ENCODE measurements at regions of chr13 and their contacts with region 1.

Region 1: GRCh38 chr13:21060987-21061763 is at the start of gene LATS2:
- DNase-seq: peak; percentile 85 to 94 (median 88)
- H3K4me3 ChIP-seq: peak within 1 kb of the TSS; percentile 49 to 93 (median 76)
- H3K27ac ChIP-seq: peak within 1 kb of the TSS in 58 of 59 donors; percentile 12 to 98 (median 89)
- H3K27me3 ChIP-seq: peaks cover 0 to 21% (median 4%) of the 10 kb centered on the region in 45 donors
- CTCF ChIP-seq: peak in 41 of 56 donors; percentile 12 to 62 (median 37)
- total RNA-seq, gene LATS2: 2.5 to 18.2 (median 6.0) TPM

Region 2: GRCh38 chr13:20940083-20940880 is 120.9 kb before region 1 on chr13:
- intact Hi-C with region 1: loop called in 1 of 2 experiments (anchors 5 kb)
- DNase-seq: no peak
- H3K4me3 ChIP-seq: no peak overlapping the region
- H3K27ac ChIP-seq: no peak overlapping the region
- H3K27me3 ChIP-seq: peaks cover 0 to 2% (median 0%) of the 10 kb centered on the region in 45 donors
- CTCF ChIP-seq: no peak